ENCODE measurements at regions of chr3 and their contacts with region 1.

Region 1: DNA sequence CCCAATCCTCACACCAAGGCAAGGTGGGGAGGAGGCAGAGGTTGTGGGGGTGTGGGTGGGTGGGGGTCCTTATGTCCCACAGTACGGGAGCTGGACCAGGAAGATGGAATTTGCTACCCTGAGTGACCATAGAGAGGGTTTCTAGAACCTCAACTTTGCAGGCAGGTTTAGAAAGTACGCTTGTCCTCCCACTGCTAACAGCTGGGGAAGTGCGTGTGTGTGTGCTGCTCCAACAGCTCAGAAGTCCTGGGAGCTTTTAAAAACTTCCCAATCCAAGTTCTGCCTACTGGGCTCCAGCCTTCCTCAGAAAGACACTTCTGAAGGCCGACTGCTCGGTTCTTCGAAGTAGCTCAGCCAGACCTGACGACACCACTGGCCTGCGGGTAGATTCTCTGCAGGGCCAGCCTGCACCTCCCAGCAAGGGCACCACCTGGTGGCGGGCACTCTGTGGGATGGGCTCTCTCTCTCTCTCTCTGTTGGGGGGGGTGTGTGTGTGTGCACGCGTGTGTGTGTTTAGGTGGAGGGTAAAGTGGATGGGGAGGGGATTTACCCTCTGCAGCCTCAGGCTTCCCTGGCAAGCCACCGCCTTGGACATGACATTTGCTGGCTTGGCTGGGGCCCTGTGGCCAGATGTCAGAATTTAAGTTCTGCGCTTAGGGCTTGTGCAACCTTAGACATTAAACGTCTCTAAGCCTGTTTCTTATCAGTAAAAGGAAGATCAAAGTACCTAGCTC is 15.6 kb downstream of the TMEM158 start:
- DNase-seq: no peak
- H3K4me3 ChIP-seq: no peak overlapping the region
- H3K27ac ChIP-seq: peak overlapping the region; percentile 42 to 70 (median 51)
- H3K4me1 ChIP-seq: peaks cover 9 to 48% (median 20%) of the 10 kb centered on the region in 3 donors
- H3K27me3 ChIP-seq: no peaks in the 10 kb centered on the region
- CTCF ChIP-seq: peak; percentile 52 to 97 (median 92)
- POLR2A ChIP-seq: no peak

Region 2: DNA sequence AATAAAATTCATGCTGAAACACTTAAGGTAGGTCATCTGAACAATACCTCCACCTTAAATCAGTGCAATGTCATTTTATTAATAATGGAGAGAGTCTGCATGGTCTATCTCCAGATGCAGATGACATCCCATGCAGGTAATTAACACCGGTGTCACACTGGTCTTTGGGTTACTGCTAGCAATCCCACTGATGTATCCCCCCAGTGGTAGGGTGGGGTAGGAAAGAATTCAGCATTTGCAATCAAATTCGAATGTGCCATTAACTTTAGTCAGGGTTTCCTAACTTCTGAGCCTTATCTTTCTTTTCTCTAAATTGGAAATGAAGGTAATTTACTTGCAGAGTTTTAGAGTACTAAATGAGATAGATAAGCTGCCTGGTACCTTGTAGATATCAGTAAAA is 404.5 kb before region 1 on chr3:
- intact Hi-C with region 1: no loop called
- DNase-seq: no peak
- H3K4me3 ChIP-seq: no peak overlapping the region
- H3K27ac ChIP-seq: no peak overlapping the region
- H3K4me1 ChIP-seq: no peaks in the 10 kb centered on the region
- H3K27me3 ChIP-seq: no peaks in the 10 kb centered on the region
- CTCF ChIP-seq: no peak
- POLR2A ChIP-seq: no peak

Region 3: GRCh38 chr3:45043728-45044299 is 166.7 kb before region 1 on chr3:
- intact Hi-C with region 1: loop called (anchors 5 kb)
- DNase-seq: no peak
- H3K4me3 ChIP-seq: no peak overlapping the region
- H3K27ac ChIP-seq: peak overlapping the region in 3 of 4 donors; percentile 15 to 55 (median 47)
- H3K4me1 ChIP-seq: peaks cover 0 to 32% (median 21%) of the 10 kb centered on the region in 3 donors
- H3K27me3 ChIP-seq: no peaks in the 10 kb centered on the region
- CTCF ChIP-seq: peak in 5 of 6 experiments; percentile 10 to 36 (median 20)
- POLR2A ChIP-seq: no peak

Region 4: GRCh38 chr3:45244356-45244755 is 33.9 kb after region 1 on chr3:
- intact Hi-C with region 1: no loop called
- DNase-seq: no peak
- H3K4me3 ChIP-seq: no peak overlapping the region
- H3K27ac ChIP-seq: no peak overlapping the region
- H3K4me1 ChIP-seq: no peaks in the 10 kb centered on the region
- H3K27me3 ChIP-seq: peaks cover 0 to 4% (median 0%) of the 10 kb centered on the region in 4 donors
- CTCF ChIP-seq: no peak
- POLR2A ChIP-seq: no peak